ENCODE measurements at regions of chr16 and their contacts with region 1.

Region 1: DNA sequence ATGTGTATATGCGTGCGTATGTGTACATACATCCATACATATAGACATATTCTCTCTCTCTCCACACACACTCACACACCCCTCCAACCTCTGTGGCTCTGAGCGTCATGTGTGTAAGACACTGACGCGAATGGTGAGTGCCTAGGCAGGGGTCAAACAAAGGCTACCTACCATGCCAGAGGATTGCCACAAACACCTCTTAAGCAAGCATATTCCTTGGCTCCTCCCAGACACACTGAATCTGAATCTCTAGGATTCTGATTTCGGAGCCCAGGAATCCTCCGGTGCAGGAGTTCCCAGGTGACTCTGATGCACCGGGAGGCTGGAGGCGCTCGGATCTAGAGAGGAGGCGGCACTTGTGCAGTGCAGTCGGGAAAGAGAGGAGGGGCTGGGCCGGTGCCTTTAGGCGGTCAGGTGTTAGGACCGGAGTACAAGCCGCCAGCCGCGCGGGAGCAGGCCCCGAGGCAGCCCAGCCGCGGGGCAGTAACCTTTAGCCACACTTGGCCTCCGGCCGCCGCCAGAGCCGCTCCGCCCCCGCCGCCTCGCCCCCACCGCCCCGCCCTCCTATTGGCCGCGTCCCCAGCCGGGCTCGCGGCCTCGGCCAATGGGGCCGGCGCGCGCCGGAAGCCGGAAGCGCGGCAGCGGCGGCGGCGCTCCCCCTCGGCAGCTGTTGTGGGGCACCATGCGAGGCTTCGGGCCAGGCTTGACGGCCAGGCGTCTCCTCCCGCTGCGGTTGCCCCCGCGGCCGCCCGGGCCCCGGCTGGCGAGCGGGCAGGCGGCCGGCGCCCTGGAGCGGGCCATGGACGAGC is at the start of gene MLYCD:
- DNase-seq: peak; percentile 89 to 93 (median 92)
- ATAC-seq: peak; percentile 86 to 91 (median 90)
- H3K4me3 ChIP-seq: peak within 1 kb of the TSS; percentile 65 to 98 (median 90)
- H3K27ac ChIP-seq: peak within 1 kb of the TSS; percentile 88 to 99 (median 98)
- H3K4me1 ChIP-seq: peaks cover 0 to 48% (median 30%) of the 10 kb centered on the region in 12 donors
- H3K27me3 ChIP-seq: no peaks in the 10 kb centered on the region
- CTCF ChIP-seq: peak in 1 of 12 donors; percentile 6
- POLR2A ChIP-seq: peak; percentile 31 to 51
- total RNA-seq, gene MLYCD: 22.5 to 65.3 (median 40.2) TPM

Region 2: DNA sequence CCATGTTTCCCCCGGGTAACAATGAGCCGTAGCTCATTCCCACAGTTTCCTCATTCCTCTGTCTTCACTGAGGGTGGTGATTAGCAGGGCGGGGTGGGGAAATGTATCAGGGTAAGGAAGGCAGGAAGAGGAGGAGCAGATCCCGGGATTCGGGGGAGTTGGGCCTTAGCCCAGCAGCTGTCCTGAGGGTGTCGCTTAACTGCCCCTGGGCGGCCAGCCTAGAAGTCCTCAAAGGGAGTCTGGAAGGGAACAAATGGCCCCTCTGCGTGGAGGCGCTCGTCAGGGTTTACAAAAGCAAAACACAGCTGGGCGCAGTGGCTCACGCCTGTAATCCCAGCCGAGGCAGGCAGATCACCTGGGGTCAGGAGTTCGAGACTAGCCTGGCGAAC is 14.6 kb after region 1 on chr16:
- intact Hi-C with region 1: loop called in 1 of 10 experiments (anchors 2 kb)
- DNase-seq: peak; percentile 80 to 92 (median 85)
- ATAC-seq: peak; percentile 91 to 96 (median 95)
- H3K4me3 ChIP-seq: no peak overlapping the region
- H3K27ac ChIP-seq: peak overlapping the region; percentile 42 to 79 (median 74)
- H3K4me1 ChIP-seq: peaks cover 0 to 29% (median 11%) of the 10 kb centered on the region in 12 donors
- H3K27me3 ChIP-seq: no peaks in the 10 kb centered on the region
- CTCF ChIP-seq: peak in 1 of 12 donors; percentile 7
- POLR2A ChIP-seq: no peak

Measured in heart left ventricle (tissue), 16 donors.